Common myeloid progenitor, CD34-positive (primary cell): ENCODE measurements at regions of chr9 and their contacts with region 1.

Region 1: GRCh38 chr9:135864447-135865049 is 42.8 kb downstream of the CAMSAP1 start:
- DNase-seq: peak; percentile 48 to 71 (median 57)
- H3K4me3 ChIP-seq: no peak overlapping the region
- H3K27ac ChIP-seq: no peak overlapping the region
- H3K4me1 ChIP-seq: peaks cover 0 to 7% (median 0%) of the 10 kb centered on the region in 4 experiments
- H3K27me3 ChIP-seq: no peaks in the 10 kb centered on the region

Region 2: GRCh38 chr9:135797507-135798262 is 66.9 kb before region 1 on chr9:
- CTCF ChIA-PET with region 1: no interaction called
- POLR2A ChIA-PET with region 1: no interaction called
- DNase-seq: peak; percentile 4 to 24 (median 22)
- H3K4me3 ChIP-seq: no peak overlapping the region
- H3K27ac ChIP-seq: no peak overlapping the region
- H3K4me1 ChIP-seq: no peaks in the 10 kb centered on the region
- H3K27me3 ChIP-seq: no peaks in the 10 kb centered on the region

Region 3: DNA sequence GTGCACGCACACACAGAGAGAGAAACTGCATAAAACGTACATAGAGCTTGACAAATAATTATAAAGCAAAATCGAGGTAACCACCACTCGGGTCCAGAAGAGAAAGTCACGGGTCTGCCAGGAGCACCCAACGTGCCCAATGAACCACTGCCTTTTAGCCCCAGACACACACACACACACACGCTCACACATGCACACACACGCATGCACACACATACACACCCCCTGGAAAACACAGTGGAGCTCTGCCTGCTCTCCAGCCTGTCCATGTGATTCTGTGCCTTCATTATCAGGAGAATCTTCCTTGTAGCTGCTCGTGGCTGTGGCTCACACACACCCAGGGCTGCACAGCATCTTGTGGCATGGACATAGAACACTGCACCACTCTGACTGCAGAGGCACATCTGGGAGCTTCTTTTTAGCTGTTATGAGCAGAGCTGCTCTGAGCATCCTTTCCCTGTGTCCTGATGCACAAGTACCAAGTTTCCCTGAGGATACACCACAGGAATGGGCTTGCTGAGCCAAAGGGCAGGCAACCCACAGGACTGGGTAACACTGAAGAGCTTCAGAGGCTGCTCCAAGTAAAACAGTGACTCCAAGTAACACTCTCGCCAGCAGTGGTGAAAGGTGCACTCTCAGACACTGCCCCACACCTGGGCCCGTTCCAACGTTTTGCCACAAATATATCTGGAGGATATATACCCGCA is 16.1 kb before region 1 on chr9:
- CTCF ChIA-PET with region 1: interaction called, 11 read pairs
- POLR2A ChIA-PET with region 1: no interaction called
- DNase-seq: no peak
- H3K4me3 ChIP-seq: no peak overlapping the region
- H3K27ac ChIP-seq: no peak overlapping the region
- H3K4me1 ChIP-seq: no peaks in the 10 kb centered on the region
- H3K27me3 ChIP-seq: no peaks in the 10 kb centered on the region

Region 4: DNA sequence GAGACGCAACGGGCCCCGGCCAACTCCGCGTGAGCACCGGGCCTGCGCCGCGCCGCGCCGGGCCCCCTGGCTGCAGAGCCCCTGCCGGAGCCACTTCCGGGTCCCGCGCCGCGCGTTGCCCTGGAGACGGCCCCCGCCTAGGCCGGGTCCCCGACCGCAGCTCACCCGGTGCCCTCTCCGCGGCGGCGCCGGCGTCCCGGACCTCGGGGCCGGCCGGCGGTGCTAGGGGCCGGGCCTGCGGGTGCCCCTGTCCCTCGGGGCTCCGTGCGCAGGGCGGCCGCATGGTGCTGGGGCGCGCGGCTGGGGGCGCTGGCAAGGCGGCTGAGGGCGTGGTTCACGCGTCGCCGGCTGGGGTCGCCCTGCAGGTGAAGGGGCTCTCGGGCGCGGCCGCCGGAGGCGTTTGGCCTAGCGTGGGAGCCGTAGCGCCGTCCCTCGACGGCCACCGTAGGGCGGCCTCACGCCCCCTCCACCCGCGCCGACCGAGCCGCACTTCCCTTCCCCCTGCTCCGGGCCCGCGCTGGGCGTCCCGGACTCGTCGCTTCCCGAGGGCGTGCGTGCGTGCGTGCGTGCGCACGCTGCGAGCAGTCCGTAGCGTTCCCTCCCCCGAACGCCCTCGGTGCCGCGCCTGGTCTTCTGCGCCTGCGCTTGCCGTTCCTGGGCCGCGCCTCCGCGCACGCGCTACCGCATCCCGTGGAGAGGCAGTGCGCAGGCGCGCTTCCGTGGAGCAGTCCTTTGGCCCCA is 253.9 kb after region 1 on chr9 and contains the start of gene TMEM250:
- CTCF ChIA-PET with region 1: interaction called, 22 read pairs
- POLR2A ChIA-PET with region 1: no interaction called
- DNase-seq: peak; percentile 96 to 98 (median 97)
- H3K4me3 ChIP-seq: peak within 1 kb of the TSS; percentile 57 to 80 (median 77)
- H3K27ac ChIP-seq: peak within 1 kb of the TSS; percentile 54 to 81
- H3K4me1 ChIP-seq: peaks cover 0 to 34% (median 31%) of the 10 kb centered on the region in 4 experiments
- H3K27me3 ChIP-seq: no peaks in the 10 kb centered on the region

Region 5: DNA sequence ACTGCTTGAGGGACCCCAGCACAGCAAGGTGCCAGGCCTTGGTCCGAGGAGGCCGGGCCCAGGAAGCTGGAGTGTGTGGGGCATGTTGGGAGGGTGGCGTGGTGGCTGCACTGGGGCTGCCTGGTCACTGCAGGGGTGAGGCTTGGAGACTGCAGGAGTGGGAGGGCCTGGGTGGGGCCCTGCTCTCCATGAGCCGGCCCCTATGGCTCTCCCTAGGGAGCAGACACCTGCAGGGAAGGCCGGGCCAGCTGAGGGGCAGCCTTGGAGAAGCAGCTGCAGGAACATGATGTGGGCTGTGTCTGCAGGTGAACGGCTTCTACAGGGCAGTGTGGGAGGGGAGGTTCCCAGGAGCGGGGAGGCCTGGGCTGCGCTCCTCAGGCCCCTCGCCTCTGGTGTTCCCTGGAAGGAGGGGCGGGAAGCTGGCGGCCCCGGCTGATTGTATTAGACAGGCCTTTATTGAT is 295.9 kb after region 1 on chr9:
- CTCF ChIA-PET with region 1: no interaction called
- POLR2A ChIA-PET with region 1: no interaction called
- DNase-seq: no peak
- H3K4me3 ChIP-seq: no peak overlapping the region
- H3K27ac ChIP-seq: no peak overlapping the region
- H3K4me1 ChIP-seq: peaks cover 0 to 5% (median 2%) of the 10 kb centered on the region in 4 experiments
- H3K27me3 ChIP-seq: peaks cover 0 to 12% (median 2%) of the 10 kb centered on the region in 5 experiments